HCT116 (cell line): ENCODE measurements at regions of chr1 and their contacts with region 1.

Region 1: GRCh38 chr1:201559679-201560162 is 20.8 kb downstream of the NAV1 start:
- DNase-seq: peak; percentile 79
- ATAC-seq: peak; percentile 99
- H3K4me3 ChIP-seq: no peak overlapping the region
- H3K27ac ChIP-seq: no peak overlapping the region
- H3K4me1 ChIP-seq: peaks cover 2 to 17% of the 10 kb centered on the region in 2 experiments; a peak in 3 of 4 replicates
- H3K27me3 ChIP-seq: no peaks in the 10 kb centered on the region
- CTCF ChIP-seq: peak; percentile 94 to 98 (median 96)
- POLR2A ChIP-seq: no peak
- RAD21 ChIP-seq: peak; percentile 100

Region 2: GRCh38 chr1:201703621-201704439 is 144.1 kb after region 1 on chr1:
- CTCF ChIA-PET with region 1: interaction called, 38 read pairs
- POLR2A ChIA-PET with region 1: no interaction called
- RAD21 ChIA-PET with region 1: interaction called, 4 to 10 read pairs
- intact Hi-C with region 1: loop called (anchors 1 kb)
- DNase-seq: peak; percentile 51
- ATAC-seq: peak; percentile 99
- H3K4me3 ChIP-seq: no peak overlapping the region
- H3K27ac ChIP-seq: no peak overlapping the region
- H3K4me1 ChIP-seq: peaks cover 2 to 4% of the 10 kb centered on the region in 2 experiments; a peak in 1 of 4 replicates
- H3K27me3 ChIP-seq: no peaks in the 10 kb centered on the region
- CTCF ChIP-seq: peak; percentile 93 to 97 (median 96)
- POLR2A ChIP-seq: no peak
- RAD21 ChIP-seq: peak; percentile 99

Region 3: GRCh38 chr1:201792534-201793305 is 233.0 kb after region 1 on chr1:
- CTCF ChIA-PET with region 1: interaction called, 21 read pairs
- POLR2A ChIA-PET with region 1: no interaction called
- RAD21 ChIA-PET with region 1: interaction called, 4 to 26 read pairs
- intact Hi-C with region 1: loop called (anchors 1 kb)
- DNase-seq: peak; percentile 70
- ATAC-seq: peak; percentile 97
- H3K4me3 ChIP-seq: no peak overlapping the region
- H3K27ac ChIP-seq: no peak overlapping the region
- H3K4me1 ChIP-seq: no peaks in the 10 kb centered on the region
- H3K27me3 ChIP-seq: no peaks in the 10 kb centered on the region
- CTCF ChIP-seq: peak; percentile 97 to 99 (median 98)
- POLR2A ChIP-seq: no peak
- RAD21 ChIP-seq: peak; percentile 99

Region 4: GRCh38 chr1:201970334-201971159 is 410.8 kb after region 1 on chr1:
- CTCF ChIA-PET with region 1: interaction called, 4 read pairs
- POLR2A ChIA-PET with region 1: no interaction called
- RAD21 ChIA-PET with region 1: no interaction called
- intact Hi-C with region 1: loop called (anchors 2 kb)
- DNase-seq: no peak
- ATAC-seq: peak; percentile 44
- H3K4me3 ChIP-seq: no peak overlapping the region
- H3K27ac ChIP-seq: no peak overlapping the region
- H3K4me1 ChIP-seq: no peaks in the 10 kb centered on the region
- H3K27me3 ChIP-seq: no peaks in the 10 kb centered on the region
- CTCF ChIP-seq: no peak
- POLR2A ChIP-seq: no peak
- RAD21 ChIP-seq: no peak